Calu3 (cell line): ENCODE measurements at regions of chr12 and their contacts with region 1.

Region 1: GRCh38 chr12:65823513-65824375 is 539 bp upstream of the HMGA2 start:
- DNase-seq: peak; percentile 81
- H3K4me3 Mint-ChIP-seq: peak overlapping the region; percentile 87
- H3K27ac Mint-ChIP-seq: peak overlapping the region; percentile 87
- H3K4me1 Mint-ChIP-seq: peaks cover 33% of the 10 kb centered on the region
- H3K27me3 Mint-ChIP-seq: no peaks in the 10 kb centered on the region
- CTCF ChIP-seq: no peak

Region 2: GRCh38 chr12:65536876-65537661 is 286.7 kb before region 1 on chr12:
- CTCF ChIA-PET with region 1: no interaction called
- intact Hi-C with region 1: loop called (anchors 10 kb)
- DNase-seq: peak; percentile 82
- H3K4me3 Mint-ChIP-seq: peak overlapping the region; percentile 8
- H3K27ac Mint-ChIP-seq: peak overlapping the region; percentile 42
- H3K4me1 Mint-ChIP-seq: peaks cover 59% of the 10 kb centered on the region
- H3K27me3 Mint-ChIP-seq: no peaks in the 10 kb centered on the region
- CTCF ChIP-seq: no peak

Region 3: GRCh38 chr12:65695113-65695865 is 128.5 kb before region 1 on chr12:
- CTCF ChIA-PET with region 1: no interaction called
- intact Hi-C with region 1: loop called (anchors 1 kb)
- DNase-seq: peak; percentile 80
- H3K4me3 Mint-ChIP-seq: peak overlapping the region; percentile 47
- H3K27ac Mint-ChIP-seq: peak overlapping the region; percentile 72
- H3K4me1 Mint-ChIP-seq: peaks cover 31% of the 10 kb centered on the region
- H3K27me3 Mint-ChIP-seq: no peaks in the 10 kb centered on the region
- CTCF ChIP-seq: no peak

Region 4: GRCh38 chr12:65891987-65892481 is 68.3 kb after region 1 on chr12:
- CTCF ChIA-PET with region 1: no interaction called
- intact Hi-C with region 1: loop called (anchors 5 kb)
- DNase-seq: peak; percentile 56
- H3K4me3 Mint-ChIP-seq: peak overlapping the region; percentile 46
- H3K27ac Mint-ChIP-seq: peak overlapping the region; percentile 79
- H3K4me1 Mint-ChIP-seq: peaks cover 93% of the 10 kb centered on the region
- H3K27me3 Mint-ChIP-seq: no peaks in the 10 kb centered on the region
- CTCF ChIP-seq: no peak

Region 5: DNA sequence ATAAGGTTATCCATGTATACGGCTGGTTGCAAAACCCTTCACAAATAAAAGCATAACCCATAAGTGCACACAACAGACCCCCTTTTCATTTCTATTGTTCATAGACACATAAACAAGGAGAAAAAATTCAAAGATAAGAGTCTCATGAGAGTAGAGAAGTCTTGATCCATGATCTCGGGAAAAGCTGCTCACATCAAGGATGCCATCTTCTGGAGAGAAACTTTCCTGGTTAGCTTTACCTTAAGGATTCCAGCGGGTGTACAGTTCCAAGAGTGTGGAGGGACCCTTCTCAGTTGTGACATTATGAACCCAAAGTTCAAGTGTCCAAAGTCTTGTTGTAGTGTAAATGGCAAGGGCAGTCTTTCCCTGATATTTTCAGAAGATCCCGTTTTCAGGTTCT is 162.3 kb after region 1 on chr12:
- CTCF ChIA-PET with region 1: no interaction called
- intact Hi-C with region 1: loop called (anchors 10 kb)
- DNase-seq: no peak
- H3K4me3 Mint-ChIP-seq: no peak overlapping the region
- H3K27ac Mint-ChIP-seq: no peak overlapping the region
- H3K4me1 Mint-ChIP-seq: no peaks in the 10 kb centered on the region
- H3K27me3 Mint-ChIP-seq: no peaks in the 10 kb centered on the region
- CTCF ChIP-seq: no peak

Region 6: GRCh38 chr12:66055837-66056319 is 232.1 kb after region 1 on chr12:
- CTCF ChIA-PET with region 1: no interaction called
- intact Hi-C with region 1: no loop called
- DNase-seq: no peak
- H3K4me3 Mint-ChIP-seq: no peak overlapping the region
- H3K27ac Mint-ChIP-seq: no peak overlapping the region
- H3K4me1 Mint-ChIP-seq: no peaks in the 10 kb centered on the region
- H3K27me3 Mint-ChIP-seq: no peaks in the 10 kb centered on the region
- CTCF ChIP-seq: no peak